ENCODE measurements at regions of chr22 and their contacts with region 1.

Region 1: DNA sequence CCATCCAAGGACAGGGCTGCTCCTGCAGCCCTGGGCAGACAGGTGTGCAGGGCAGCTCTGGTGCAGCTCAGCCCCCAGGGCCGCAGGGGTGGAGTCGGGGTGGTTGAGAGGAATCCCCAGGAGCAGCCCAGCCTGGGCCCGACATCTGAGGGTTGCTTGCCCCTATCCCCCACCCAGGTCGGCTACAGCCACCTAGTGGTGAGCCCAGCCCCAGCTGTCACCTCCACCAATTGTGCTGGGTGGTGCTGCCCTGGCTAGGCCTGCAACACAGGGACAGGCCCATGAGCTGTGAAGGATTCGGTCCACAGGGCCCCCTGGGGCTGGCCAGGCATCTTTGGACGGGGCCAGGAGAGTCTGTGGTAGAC is 29.6 kb downstream of the RTN4R start:
- H3K4me3 ChIP-seq: no peak overlapping the region; the same call in 1 of the 2 replicates
- H3K27ac ChIP-seq: peak overlapping the region; percentile 65
- H3K4me1 ChIP-seq: peaks cover 14% of the 10 kb centered on the region
- CTCF ChIP-seq: peak; percentile 95

Region 2: GRCh38 chr22:19661156-19661555 is 577.4 kb before region 1 on chr22:
- CTCF ChIA-PET with region 1: no interaction called
- POLR2A ChIA-PET with region 1: no interaction called
- H3K4me3 ChIP-seq: no peak overlapping the region
- H3K27ac ChIP-seq: no peak overlapping the region
- H3K4me1 ChIP-seq: 0 out of 2 replicates have a peak, but pooled peaks cover 3% of the 10 kb centered on the region
- CTCF ChIP-seq: no peak

Region 3: GRCh38 chr22:20156611-20157429 is 81.7 kb before region 1 on chr22:
- CTCF ChIA-PET with region 1: interaction called, 57 read pairs
- POLR2A ChIA-PET with region 1: interaction called, 10 read pairs
- H3K4me3 ChIP-seq: no peak overlapping the region
- H3K27ac ChIP-seq: no peak overlapping the region
- H3K4me1 ChIP-seq: no peaks in the 10 kb centered on the region
- CTCF ChIP-seq: peak; percentile 98

Region 4: DNA sequence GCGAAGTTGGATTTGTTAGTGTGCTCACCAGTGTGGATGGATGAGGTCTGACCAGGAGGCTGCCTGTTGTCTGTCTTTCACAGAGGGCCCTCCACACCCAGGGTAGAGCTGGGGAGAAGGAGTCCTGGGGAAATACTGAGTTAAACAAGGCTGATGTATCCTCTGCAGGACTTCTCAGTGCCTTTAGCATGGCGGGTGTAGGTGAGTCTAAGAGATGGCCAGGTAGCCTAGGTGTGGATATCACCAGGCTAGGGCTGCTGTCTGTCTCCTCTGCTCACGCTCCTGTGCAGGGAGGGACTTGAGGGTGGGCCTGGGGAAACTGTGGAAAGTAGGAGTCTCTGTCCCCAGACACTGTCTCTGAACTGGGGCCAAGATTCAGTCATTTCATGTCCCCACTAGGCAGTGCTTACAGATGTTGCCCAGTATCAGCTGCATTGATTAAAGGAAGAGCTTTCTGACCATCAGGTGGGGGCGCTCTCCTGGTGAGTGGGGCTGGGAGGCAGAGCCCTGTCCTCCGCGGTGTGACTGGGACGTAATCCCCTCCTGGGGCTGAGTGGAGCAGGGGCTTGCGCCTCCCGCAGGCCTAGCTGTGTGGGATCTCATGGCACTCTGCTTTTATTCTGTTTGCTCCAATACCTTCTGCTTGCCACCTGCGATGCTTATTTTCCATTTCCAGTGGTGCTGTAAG is 52.2 kb before region 1 on chr22:
- CTCF ChIA-PET with region 1: interaction called, 25 read pairs
- POLR2A ChIA-PET with region 1: no interaction called
- H3K4me3 ChIP-seq: no peak overlapping the region
- H3K27ac ChIP-seq: no peak overlapping the region
- H3K4me1 ChIP-seq: no peaks in the 10 kb centered on the region
- CTCF ChIP-seq: peak; percentile 40; the same call in 1 of the 2 replicates

Region 5: GRCh38 chr22:20228055-20228938 is 10.2 kb before region 1 on chr22:
- CTCF ChIA-PET with region 1: interaction called, 12 read pairs
- POLR2A ChIA-PET with region 1: interaction called, 3 read pairs
- H3K4me3 ChIP-seq: no peak overlapping the region
- H3K27ac ChIP-seq: no peak overlapping the region
- H3K4me1 ChIP-seq: no peaks in the 10 kb centered on the region
- CTCF ChIP-seq: no peak

Region 6: DNA sequence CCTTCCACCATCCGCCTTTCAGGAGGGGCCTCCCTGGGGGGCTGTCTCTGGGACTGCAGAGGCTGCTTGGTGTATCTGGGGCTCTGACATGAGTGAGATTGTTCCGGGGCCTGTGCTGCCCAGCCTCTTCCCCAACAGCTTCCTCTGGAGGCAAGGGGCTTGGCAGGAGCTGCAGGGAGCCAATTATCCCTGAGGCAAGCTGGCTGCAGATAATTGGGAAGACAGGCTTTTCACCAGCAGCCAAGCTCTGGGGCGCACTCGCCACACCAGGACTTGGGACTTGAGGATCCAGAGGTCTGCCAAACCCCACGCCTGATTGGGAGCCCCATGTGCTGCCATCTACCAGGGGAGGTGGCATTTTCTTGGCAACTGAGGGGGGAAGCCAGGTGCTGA is 45.2 kb after region 1 on chr22:
- CTCF ChIA-PET with region 1: interaction called, 16 read pairs
- POLR2A ChIA-PET with region 1: interaction called, 3 read pairs
- H3K4me3 ChIP-seq: no peak overlapping the region
- H3K27ac ChIP-seq: no peak overlapping the region
- H3K4me1 ChIP-seq: no peaks in the 10 kb centered on the region
- CTCF ChIP-seq: no peak

Measured in HEK293 (cell line).